HCT116 (cell line): ENCODE measurements at regions of chr22 and their contacts with region 1.

Region 1: DNA sequence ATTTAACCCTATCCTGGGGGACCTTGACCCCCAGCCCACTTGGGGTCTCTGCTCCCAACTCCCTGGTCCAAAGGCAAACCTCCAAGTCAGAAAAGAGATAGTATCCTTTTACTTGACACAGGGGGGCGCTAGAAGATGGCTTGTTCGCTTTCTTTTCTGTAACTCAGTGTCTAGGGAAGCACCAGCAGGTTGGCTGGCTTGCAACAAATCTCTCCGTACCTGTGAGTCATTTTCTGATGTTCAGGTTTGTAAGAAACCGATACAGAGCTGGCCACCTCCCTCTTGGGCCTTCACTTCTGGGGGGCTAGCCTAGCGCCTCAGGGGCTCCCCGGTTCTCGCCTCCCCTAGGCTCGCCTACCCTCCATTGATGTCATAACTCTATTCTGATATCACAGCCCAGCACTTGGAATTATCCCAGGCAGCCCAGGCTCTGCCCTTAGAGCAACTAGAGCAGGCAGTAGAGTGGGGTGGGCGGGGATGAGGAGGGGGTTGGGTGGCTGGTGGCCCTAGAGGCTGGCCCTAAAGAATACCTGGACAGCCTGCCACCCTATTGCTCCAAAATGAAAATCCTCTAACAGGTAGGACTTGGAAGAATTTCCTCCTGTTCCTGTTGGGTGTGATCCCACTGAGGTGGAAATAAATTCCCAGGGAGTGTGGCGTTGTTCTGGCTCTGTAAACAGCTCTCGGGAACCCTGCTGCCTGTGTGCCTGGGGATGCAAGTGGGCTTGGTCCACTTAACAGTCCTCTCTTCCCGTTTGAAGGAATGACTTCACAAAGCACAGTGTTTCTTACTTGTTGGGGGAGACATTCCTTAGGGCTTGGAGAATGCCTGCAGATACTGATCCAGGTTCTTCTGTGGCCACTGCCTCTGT is 69.4 kb downstream of the OSBP2 start:
- DNase-seq: peak; percentile 59
- ATAC-seq: peak; percentile 90
- H3K4me3 ChIP-seq: no peak overlapping the region
- H3K27ac ChIP-seq: no peak overlapping the region
- H3K4me1 ChIP-seq: peaks cover 2 to 3% of the 10 kb centered on the region in 2 experiments; a peak in 2 of 4 replicates
- H3K27me3 ChIP-seq: no peaks in the 10 kb centered on the region
- CTCF ChIP-seq: peak; percentile 68 to 90 (median 80)
- POLR2A ChIP-seq: no peak
- RAD21 ChIP-seq: peak; percentile 94

Region 2: DNA sequence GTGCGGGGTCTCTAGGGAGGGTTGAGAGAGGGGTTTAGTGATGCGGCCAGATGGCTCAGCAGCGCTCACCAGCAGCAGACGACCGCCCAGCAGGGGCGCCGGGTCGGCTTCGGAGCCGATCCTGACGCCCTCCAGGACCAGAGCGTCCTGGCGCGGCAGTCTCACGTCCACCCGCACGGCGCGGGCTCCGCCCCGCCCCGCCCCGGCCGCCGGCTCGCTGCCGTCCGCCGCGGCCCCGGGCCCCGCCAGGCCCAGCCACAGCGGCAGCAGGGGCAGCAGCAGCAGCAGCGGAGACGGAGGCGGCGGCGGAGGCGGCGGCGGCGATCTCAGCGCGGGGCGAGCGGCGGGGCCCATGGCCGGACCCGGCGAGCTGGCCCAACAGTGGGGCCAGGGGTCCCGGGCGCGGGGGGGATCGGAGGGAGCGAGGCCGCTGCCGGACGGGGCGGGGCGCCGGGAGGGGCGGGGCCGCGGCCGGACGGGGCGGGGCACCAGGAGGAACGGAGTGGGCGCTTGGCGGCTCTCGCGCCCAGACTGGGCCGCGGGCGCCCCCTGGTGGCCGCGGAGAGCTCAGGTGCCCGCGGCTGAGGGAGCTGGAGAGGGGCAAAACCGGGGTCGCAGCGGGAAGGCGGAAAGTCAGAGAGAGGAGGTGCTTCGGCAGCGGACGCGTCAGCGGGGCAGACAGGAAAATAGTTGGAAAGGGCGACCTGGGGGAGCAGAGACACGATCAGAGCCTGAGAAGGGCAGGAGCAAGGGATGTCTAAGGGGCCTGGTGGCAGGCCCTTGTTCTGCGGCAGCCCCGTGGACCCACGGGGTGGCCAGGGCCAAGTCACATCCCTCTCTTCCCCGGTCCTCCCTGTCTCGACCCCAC is 376.9 kb before region 1 on chr22 and contains the start of gene RNF215:
- CTCF ChIA-PET with region 1: no interaction called
- POLR2A ChIA-PET with region 1: no interaction called
- RAD21 ChIA-PET with region 1: no interaction called
- intact Hi-C with region 1: no loop called
- DNase-seq: peak; percentile 44
- ATAC-seq: peak; percentile 88
- H3K4me3 ChIP-seq: peak within 1 kb of the TSS; percentile 60 to 68
- H3K27ac ChIP-seq: peak within 1 kb of the TSS; percentile 69
- H3K4me1 ChIP-seq: peaks cover 3 to 31% of the 10 kb centered on the region in 2 experiments; a peak in 3 of 4 replicates
- H3K27me3 ChIP-seq: no peaks in the 10 kb centered on the region
- CTCF ChIP-seq: peak; percentile 77 to 78 (median 78)
- POLR2A ChIP-seq: no peak
- RAD21 ChIP-seq: peak; percentile 88
- total RNA-seq, gene RNF215: 20.2 TPM

Region 3: DNA sequence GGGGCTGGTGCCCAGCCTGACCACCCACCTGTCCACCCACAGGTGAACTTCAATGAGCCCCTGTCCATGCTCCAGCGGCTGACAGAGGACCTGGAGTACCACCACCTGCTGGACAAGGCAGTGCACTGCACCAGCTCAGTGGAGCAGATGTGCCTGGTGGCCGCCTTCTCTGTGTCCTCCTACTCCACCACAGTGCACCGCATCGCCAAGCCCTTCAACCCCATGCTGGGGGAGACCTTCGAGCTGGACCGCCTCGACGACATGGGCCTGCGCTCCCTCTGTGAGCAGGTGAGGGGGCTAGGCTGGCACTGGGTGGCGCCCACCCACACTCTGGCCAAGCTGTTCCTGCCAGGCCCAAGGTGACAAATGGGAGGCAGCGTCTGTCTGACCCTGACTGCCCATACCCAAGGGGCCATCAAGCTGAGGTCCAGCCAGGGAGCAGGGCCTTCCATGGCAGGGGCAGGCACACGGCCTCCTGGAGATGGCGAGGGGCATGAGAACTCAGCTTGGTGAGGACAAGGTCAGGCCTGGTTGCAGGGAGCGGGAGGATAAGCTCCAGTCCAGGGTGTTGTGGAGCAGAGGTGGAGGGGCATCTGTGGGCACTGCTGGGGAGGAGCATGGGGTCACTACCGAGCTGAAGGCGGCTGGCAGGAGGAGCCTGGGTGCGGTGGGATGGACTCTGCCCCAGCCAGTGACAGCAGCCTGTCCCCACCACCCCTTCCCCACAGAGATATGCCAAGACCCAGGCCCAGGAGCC is 126.8 kb after region 1 on chr22:
- CTCF ChIA-PET with region 1: interaction called, 19 read pairs
- POLR2A ChIA-PET with region 1: no interaction called
- RAD21 ChIA-PET with region 1: interaction called in 1 of 2 experiments, 8 read pairs
- intact Hi-C with region 1: loop called (anchors 1 kb)
- DNase-seq: peak; percentile 10
- ATAC-seq: peak; percentile 94
- H3K4me3 ChIP-seq: no peak overlapping the region
- H3K27ac ChIP-seq: no peak overlapping the region
- H3K4me1 ChIP-seq: no peaks in the 10 kb centered on the region
- H3K27me3 ChIP-seq: no peaks in the 10 kb centered on the region
- CTCF ChIP-seq: peak; percentile 57 to 91 (median 79); a peak in 5 of 6 replicates
- POLR2A ChIP-seq: no peak
- RAD21 ChIP-seq: peak; percentile 69

Region 4: DNA sequence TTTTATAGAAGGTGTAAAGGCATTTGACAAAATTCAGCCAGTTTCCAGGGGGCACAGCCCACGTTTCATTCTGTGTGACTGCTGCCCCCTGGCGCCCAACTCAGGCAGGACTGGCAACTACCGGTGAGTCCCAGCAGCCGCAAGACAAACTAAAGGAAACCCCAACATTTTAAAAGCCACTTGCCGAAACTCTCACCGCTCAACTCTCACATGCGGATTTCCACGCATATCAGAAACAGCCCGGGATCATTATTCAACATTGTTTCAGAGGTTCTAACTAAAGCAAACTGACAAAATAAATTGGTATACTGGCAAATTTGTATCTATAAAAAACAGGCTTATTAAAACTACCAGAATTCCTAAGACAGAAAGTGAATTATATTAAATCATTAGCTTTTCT is 156.4 kb after region 1 on chr22:
- CTCF ChIA-PET with region 1: interaction called, 45 read pairs
- POLR2A ChIA-PET with region 1: interaction called, 5 read pairs
- RAD21 ChIA-PET with region 1: interaction called in 1 of 2 experiments, 3 read pairs
- intact Hi-C with region 1: loop called (anchors 1 kb)
- DNase-seq: peak; percentile 32
- ATAC-seq: peak; percentile 94
- H3K4me3 ChIP-seq: no peak overlapping the region
- H3K27ac ChIP-seq: no peak overlapping the region
- H3K4me1 ChIP-seq: no peaks in the 10 kb centered on the region
- H3K27me3 ChIP-seq: no peaks in the 10 kb centered on the region
- CTCF ChIP-seq: peak; percentile 82 to 91 (median 83)
- POLR2A ChIP-seq: no peak
- RAD21 ChIP-seq: peak; percentile 85

Region 5: DNA sequence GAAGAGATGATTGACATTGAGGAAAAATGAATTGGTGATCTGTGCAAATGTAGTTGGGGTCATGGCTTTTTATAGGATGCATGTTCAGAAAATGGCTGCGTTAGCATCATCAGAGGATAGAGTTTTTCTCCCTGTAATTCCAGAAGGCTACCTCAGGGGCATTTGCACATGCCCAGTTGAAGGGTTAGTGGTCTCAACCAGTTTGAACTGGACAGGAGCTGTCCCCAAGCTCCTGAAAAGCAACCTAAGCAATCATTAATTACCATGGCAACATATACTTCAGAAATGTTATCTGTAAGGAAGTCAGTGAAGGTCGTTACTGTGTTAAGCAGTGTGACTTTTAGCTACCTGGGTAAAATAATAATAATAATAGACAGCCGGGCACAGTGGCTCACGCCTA is 234.3 kb after region 1 on chr22:
- CTCF ChIA-PET with region 1: no interaction called
- POLR2A ChIA-PET with region 1: no interaction called
- RAD21 ChIA-PET with region 1: no interaction called
- intact Hi-C with region 1: no loop called
- DNase-seq: no peak
- ATAC-seq: no peak; the same call in 1 of the 2 replicates
- H3K4me3 ChIP-seq: no peak overlapping the region
- H3K27ac ChIP-seq: no peak overlapping the region
- H3K4me1 ChIP-seq: no peaks in the 10 kb centered on the region
- H3K27me3 ChIP-seq: no peaks in the 10 kb centered on the region
- CTCF ChIP-seq: no peak
- POLR2A ChIP-seq: no peak
- RAD21 ChIP-seq: no peak

Region 6: GRCh38 chr22:31148953-31149627 is 385.0 kb after region 1 on chr22:
- CTCF ChIA-PET with region 1: no interaction called
- POLR2A ChIA-PET with region 1: no interaction called
- RAD21 ChIA-PET with region 1: no interaction called
- intact Hi-C with region 1: loop called (anchors 1 kb)
- DNase-seq: peak; percentile 66
- ATAC-seq: peak; percentile 96
- H3K4me3 ChIP-seq: no peak overlapping the region
- H3K27ac ChIP-seq: no peak overlapping the region
- H3K4me1 ChIP-seq: peaks cover 0 to 15% of the 10 kb centered on the region in 2 experiments; a peak in 2 of 4 replicates
- H3K27me3 ChIP-seq: no peaks in the 10 kb centered on the region
- CTCF ChIP-seq: peak; percentile 90 to 99 (median 93)
- POLR2A ChIP-seq: no peak
- RAD21 ChIP-seq: peak; percentile 96